Aorta (tissue), 5 donors: ENCODE measurements at regions of chr6 and their contacts with region 1.

Region 1: GRCh38 chr6:42075159-42075838 is 25.0 kb downstream of the TAF8 start:
- DNase-seq: peak; percentile 77 to 89
- ATAC-seq: peak; percentile 73
- H3K4me3 ChIP-seq: no peak overlapping the region
- H3K27ac ChIP-seq: no peak overlapping the region
- H3K4me1 ChIP-seq: no peaks in the 10 kb centered on the region
- H3K27me3 ChIP-seq: no peaks in the 10 kb centered on the region

Region 2: GRCh38 chr6:42166444-42167141 is 91.3 kb after region 1 on chr6:
- intact Hi-C with region 1: loop called (anchors 2 kb)
- DNase-seq: peak in 1 of 2 donors; percentile 60
- ATAC-seq: peak; percentile 82
- H3K4me3 ChIP-seq: no peak overlapping the region
- H3K27ac ChIP-seq: no peak overlapping the region
- H3K4me1 ChIP-seq: no peaks in the 10 kb centered on the region
- H3K27me3 ChIP-seq: no peaks in the 10 kb centered on the region

Region 3: DNA sequence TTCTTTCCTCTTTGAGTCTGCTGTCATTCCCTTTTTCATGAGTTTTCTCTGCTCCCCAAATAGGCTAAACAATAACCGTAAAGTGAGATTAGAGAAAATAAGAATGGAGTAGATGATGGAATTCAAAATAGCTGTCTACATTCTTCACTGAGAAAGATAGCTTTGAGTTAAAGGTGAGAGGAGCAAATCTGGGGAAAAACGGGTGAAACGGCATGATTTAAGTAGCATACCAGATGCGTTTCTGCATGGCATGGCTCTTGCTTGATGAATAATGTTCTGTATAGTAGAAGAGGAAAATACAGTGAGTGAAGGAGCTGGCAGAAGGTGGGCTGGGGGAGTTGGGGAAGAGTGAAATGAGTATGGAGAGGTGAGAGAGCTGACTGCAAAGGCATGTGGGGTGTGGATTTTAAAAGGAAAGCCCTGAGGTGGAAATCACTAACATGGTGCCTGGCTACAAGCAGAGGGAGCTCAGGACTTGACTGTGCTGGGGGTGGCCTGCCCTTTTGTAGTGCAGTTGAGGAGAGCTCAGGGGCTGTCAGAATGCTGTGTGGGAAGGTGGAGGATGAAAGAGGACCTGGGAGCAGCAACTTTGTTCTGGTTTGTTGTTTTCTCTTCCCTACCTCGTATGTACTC is 715.4 kb after region 1 on chr6:
- intact Hi-C with region 1: no loop called
- DNase-seq: no peak
- ATAC-seq: peak; percentile 31
- H3K4me3 ChIP-seq: no peak overlapping the region
- H3K27ac ChIP-seq: peak overlapping the region; percentile 16 to 28
- H3K4me1 ChIP-seq: peaks cover 4 to 7% of the 10 kb centered on the region in 2 donors
- H3K27me3 ChIP-seq: no peaks in the 10 kb centered on the region